Activated CD8-positive, alpha-beta T cell treated with anti-CD3 and anti-CD28 coated beads for 36 hours (primary cell): ENCODE measurements at regions of chr22 and their contacts with region 1.

Region 1: DNA sequence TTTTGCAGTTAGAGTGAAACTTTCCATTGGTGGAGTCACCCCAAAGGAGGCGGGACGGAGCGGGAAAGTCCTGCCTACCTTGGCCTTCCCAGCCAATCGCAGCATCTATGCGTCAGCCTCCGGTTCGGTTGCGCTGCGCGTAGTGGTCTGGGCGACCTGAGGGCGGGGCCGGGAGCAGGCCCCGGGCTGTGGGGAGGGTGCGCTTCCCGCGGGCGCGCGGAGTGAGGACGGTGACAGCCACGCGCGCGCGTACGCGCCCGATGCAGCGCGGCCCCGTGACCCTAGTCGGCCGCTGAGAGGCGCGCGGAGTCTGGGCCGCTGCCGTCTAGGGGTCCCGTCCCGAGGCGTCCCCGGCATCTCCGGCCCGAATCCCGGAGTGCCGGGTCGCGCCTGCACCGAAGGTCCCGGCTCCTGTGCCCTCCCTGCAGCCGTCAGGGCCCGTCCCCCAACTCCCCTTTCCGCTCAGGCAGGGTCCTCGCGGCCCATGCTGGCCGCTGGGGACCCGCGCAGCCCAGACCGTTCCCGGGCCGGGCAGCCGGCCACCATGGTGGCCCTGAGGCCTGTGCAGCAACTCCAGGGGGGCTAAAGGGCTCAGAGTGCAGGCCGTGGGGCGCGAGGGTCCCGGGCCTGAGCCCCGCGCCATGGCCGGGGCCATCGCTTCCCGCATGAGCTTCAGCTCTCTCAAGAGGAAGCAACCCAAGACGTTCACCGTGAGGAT is at the start of gene NF2:
- DNase-seq: peak; percentile 99
- ATAC-seq: peak; percentile 97
- H3K4me3 Mint-ChIP-seq: peak within 1 kb of the TSS; percentile 85
- H3K27ac Mint-ChIP-seq: peak within 1 kb of the TSS; percentile 95
- H3K4me1 Mint-ChIP-seq: peaks cover 22% of the 10 kb centered on the region
- H3K27me3 Mint-ChIP-seq: no peaks in the 10 kb centered on the region
- CTCF ChIP-seq: no peak
- total RNA-seq, gene NF2: 34.4 to 35.3 TPM

Region 2: DNA sequence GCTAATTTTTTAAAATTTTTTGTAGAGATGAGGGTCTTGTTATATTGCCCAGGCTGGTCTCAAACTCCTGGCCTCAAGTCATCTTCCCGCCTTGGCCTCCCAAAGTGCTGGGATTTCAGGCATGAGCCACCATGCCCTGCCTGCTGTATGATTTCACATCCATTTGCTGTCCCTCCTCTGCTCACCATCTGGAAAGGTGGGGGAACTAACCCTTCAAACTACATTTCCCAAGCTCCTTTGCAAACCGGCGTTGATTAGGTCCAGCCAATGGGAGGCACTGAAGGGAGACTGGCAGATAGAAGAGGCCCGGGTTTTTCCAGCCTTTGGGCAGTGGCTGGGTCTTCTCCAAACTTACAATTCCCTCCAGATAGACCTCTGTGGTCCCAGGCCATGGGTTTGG is 145.8 kb before region 1 on chr22:
- CTCF ChIA-PET with region 1: no interaction called
- POLR2A ChIA-PET with region 1: no interaction called
- intact Hi-C with region 1: no loop called
- DNase-seq: peak; percentile 40
- ATAC-seq: peak; percentile 77
- H3K4me3 Mint-ChIP-seq: no peak overlapping the region
- H3K27ac Mint-ChIP-seq: no peak overlapping the region
- H3K4me1 Mint-ChIP-seq: no peaks in the 10 kb centered on the region
- H3K27me3 Mint-ChIP-seq: no peaks in the 10 kb centered on the region
- CTCF ChIP-seq: no peak

Region 3: GRCh38 chr22:29587938-29588699 is 15.4 kb before region 1 on chr22:
- CTCF ChIA-PET with region 1: interaction called, 11 read pairs
- POLR2A ChIA-PET with region 1: interaction called, 9 read pairs
- intact Hi-C with region 1: no loop called
- DNase-seq: no peak
- ATAC-seq: no peak
- H3K4me3 Mint-ChIP-seq: no peak overlapping the region
- H3K27ac Mint-ChIP-seq: no peak overlapping the region
- H3K4me1 Mint-ChIP-seq: peaks cover 9% of the 10 kb centered on the region
- H3K27me3 Mint-ChIP-seq: no peaks in the 10 kb centered on the region
- CTCF ChIP-seq: no peak

Region 4: GRCh38 chr22:29689880-29690213 is 86.3 kb after region 1 on chr22:
- CTCF ChIA-PET with region 1: no interaction called
- POLR2A ChIA-PET with region 1: no interaction called
- intact Hi-C with region 1: no loop called
- DNase-seq: peak; percentile 37
- ATAC-seq: peak; percentile 47
- H3K4me3 Mint-ChIP-seq: no peak overlapping the region
- H3K27ac Mint-ChIP-seq: no peak overlapping the region
- H3K4me1 Mint-ChIP-seq: no peaks in the 10 kb centered on the region
- H3K27me3 Mint-ChIP-seq: no peaks in the 10 kb centered on the region
- CTCF ChIP-seq: peak; percentile 57

Region 5: GRCh38 chr22:29979777-29980321 is 376.3 kb after region 1 on chr22:
- CTCF ChIA-PET with region 1: no interaction called
- POLR2A ChIA-PET with region 1: no interaction called
- intact Hi-C with region 1: no loop called
- DNase-seq: no peak
- ATAC-seq: no peak
- H3K4me3 Mint-ChIP-seq: no peak overlapping the region
- H3K27ac Mint-ChIP-seq: no peak overlapping the region
- H3K4me1 Mint-ChIP-seq: no peaks in the 10 kb centered on the region
- H3K27me3 Mint-ChIP-seq: no peaks in the 10 kb centered on the region
- CTCF ChIP-seq: no peak